ENCODE measurements at regions of chr5 and their contacts with region 1.

Region 1: DNA sequence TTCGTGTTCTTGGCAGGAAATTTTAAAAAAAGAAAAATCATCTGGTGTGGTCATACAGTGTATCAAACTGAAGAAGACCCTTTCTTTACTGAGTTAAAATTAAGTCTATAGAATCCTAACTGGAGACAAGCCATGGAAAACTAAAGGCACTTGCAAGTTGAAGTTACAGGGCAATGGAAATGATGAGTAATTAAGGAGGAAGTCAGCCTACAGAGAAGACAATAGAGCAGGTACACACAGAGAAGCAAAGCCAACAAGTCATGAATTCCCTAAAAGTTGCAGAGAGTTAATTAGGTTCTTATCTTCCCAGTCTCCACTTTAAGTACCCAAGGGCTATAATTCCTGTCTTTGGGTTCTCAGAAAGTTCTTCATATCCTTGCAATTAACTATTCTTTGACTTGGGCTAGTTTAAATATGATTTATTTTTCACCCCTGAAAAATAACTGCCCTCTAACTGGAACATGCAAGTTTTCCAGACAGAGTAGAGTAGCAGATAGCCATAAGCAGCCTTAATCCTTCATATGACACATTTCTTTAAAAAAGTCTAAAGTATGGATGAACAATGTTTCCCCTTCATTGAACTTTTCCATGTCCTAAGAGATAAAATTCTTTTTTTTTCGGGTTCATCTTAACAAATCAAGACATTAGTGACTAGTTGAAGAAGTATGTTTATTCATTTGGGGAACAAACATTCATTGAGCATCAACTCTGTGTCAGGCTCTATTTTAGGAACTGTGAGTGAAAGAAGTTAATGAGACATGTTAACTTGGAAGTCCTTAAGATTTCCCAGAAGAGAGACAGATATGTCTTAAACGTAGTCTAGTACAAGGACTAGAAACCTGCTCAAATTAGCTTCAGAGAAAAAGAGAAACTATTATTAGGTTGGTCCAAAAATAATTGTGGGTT is 5.2 kb upstream of the ITGA2 start:
- DNase-seq: peak; percentile 79
- H3K4me3 ChIP-seq: no peak overlapping the region
- H3K27ac ChIP-seq: peak overlapping the region; percentile 38
- H3K4me1 ChIP-seq: peaks cover 50% of the 10 kb centered on the region
- H3K27me3 ChIP-seq: no peaks in the 10 kb centered on the region
- CTCF ChIP-seq: no peak
- POLR2A ChIP-seq: no peak

Region 2: GRCh38 chr5:52961274-52961681 is 22.7 kb before region 1 on chr5:
- CTCF ChIA-PET with region 1: interaction called, 9 read pairs
- POLR2A ChIA-PET with region 1: no interaction called
- dilution Hi-C with region 1: no loop called
- intact Hi-C with region 1: loop called (anchors 2 kb)
- DNase-seq: no peak
- H3K4me3 ChIP-seq: no peak overlapping the region
- H3K27ac ChIP-seq: no peak overlapping the region
- H3K4me1 ChIP-seq: no peaks in the 10 kb centered on the region
- H3K27me3 ChIP-seq: no peaks in the 10 kb centered on the region
- CTCF ChIP-seq: no peak
- POLR2A ChIP-seq: no peak

Region 3: GRCh38 chr5:53211799-53212198 is 227.8 kb after region 1 on chr5:
- CTCF ChIA-PET with region 1: no interaction called
- POLR2A ChIA-PET with region 1: no interaction called
- dilution Hi-C with region 1: no loop called
- intact Hi-C with region 1: no loop called
- DNase-seq: peak; percentile 34
- H3K4me3 ChIP-seq: no peak overlapping the region
- H3K27ac ChIP-seq: no peak overlapping the region
- H3K4me1 ChIP-seq: no peaks in the 10 kb centered on the region
- H3K27me3 ChIP-seq: no peaks in the 10 kb centered on the region
- CTCF ChIP-seq: no peak
- POLR2A ChIP-seq: no peak

Measured in endothelial cell of umbilical vein (primary cell).